ENCODE measurements at regions of chr5 and their contacts with region 1.

Region 1: DNA sequence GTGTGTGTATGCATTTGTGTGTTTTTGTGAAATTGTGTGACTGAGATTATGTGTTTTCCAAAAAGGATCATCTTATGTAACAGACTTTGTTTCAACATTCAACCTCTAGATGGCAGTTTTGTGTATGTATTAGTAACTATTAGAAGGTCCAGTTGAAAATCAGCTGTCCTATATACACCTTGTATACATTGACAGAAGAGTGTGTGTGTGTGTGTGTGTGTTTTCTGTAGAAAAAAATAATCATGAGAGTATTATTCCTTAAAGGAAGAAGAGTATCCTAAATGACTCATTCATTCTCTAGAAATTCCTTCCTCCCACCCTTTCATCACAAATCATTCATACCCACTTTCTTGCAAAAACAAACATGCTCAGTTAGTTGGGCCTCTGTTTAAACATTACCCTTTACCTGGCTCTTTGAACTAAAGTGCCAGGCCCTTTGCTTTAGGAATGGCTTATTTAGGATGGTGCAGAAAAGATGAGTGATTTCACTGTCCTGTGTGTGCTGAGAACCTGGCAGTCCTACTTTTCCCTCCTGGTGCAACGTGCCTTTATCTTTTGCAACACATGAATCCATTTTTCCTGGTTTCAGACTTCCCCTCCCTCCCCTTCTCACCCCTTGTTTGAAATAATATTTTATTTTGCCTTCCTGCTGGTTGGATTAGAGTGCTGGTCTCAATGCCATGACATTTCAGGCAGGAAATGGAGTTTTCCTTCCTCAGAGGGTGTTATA is 152.2 kb downstream of the ARHGAP26 start:
- DNase-seq: no peak
- H3K4me3 ChIP-seq: no peak overlapping the region
- CTCF ChIP-seq: peak; percentile 42

Region 2: DNA sequence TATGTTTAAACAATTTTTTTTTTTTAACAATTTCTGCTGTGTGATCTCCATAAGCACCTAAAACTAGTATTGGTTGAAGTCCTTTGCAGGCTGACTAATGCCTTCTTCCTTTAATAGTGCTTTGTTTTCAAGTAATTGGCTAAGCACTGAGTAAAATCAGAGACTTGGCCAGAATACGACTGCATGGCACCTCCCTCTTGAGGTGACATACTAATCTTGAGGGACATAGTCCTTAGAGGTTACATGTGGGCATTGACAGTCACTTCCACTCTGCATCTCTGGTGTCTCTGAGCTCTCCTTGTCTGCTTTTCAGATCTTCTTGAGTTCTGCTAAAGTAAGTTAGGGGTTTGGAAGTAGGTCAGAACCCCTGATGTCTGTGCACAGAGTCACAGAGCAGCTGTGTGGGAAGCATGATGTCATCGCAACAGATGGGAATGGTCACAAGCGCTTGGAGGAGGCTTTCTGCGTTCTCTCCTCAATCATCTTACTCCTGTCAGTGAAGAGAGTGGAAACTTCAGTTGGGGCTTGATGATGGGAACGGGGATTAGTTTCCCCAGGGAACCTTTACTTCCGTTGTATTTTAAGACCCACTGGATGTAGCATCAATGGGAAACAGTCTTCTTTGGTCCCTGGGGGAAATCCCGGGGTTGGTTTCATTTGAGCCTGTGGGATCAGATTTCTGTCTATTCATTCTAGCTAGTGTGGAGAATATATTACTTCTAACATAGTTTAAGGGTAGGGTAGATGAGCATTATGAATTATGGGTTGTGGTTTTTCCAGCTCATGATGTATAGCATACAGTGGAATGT is 15.3 kb before region 1 on chr5:
- CTCF ChIA-PET with region 1: interaction called, 20 read pairs
- POLR2A ChIA-PET with region 1: no interaction called
- DNase-seq: no peak
- H3K4me3 ChIP-seq: no peak overlapping the region
- CTCF ChIP-seq: no peak